OCI-LY7 (cell line): ENCODE measurements at regions of chr17 and their contacts with region 1.

Region 1: GRCh38 chr17:29931231-29931932 is 1.4 kb upstream of the SSH2 start:
- DNase-seq: peak; percentile 99
- H3K4me3 ChIP-seq: peak overlapping the region; percentile 84
- H3K27ac ChIP-seq: peak overlapping the region; percentile 95
- H3K4me1 ChIP-seq: peaks cover 31% of the 10 kb centered on the region
- CTCF ChIP-seq: peak; percentile 98

Region 2: DNA sequence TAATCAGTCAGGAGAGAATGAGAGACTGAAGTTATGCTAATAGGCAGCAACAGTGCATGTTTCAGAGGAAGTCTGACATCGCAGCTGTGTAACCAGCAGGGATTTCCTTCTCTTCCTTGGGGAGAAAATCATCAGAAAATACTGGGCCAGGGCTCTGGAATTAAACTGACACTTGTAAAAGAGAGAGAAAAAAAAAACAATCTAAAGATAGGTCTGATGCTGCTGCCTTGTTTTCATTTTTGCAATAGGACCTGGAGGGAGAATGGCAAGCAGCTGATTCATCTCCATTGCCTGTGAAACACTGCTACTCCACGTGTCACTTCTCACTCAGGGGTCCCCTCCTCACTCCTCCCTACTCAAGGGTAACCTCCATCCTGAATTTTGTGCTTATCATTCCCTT is 291.0 kb before region 1 on chr17:
- CTCF ChIA-PET with region 1: interaction called, 4 read pairs
- POLR2A ChIA-PET with region 1: no interaction called
- intact Hi-C with region 1: loop called (anchors 1 kb)
- DNase-seq: no peak
- H3K4me3 ChIP-seq: no peak overlapping the region
- H3K27ac ChIP-seq: no peak overlapping the region
- H3K4me1 ChIP-seq: peaks cover 10% of the 10 kb centered on the region
- CTCF ChIP-seq: no peak

Region 3: GRCh38 chr17:29807520-29808351 is 123.6 kb before region 1 on chr17:
- CTCF ChIA-PET with region 1: interaction called, 16 read pairs
- POLR2A ChIA-PET with region 1: interaction called, 74 read pairs
- intact Hi-C with region 1: loop called (anchors 1 kb)
- DNase-seq: peak; percentile 83
- H3K4me3 ChIP-seq: peak overlapping the region; percentile 23
- H3K27ac ChIP-seq: peak overlapping the region; percentile 85
- H3K4me1 ChIP-seq: peaks cover 38% of the 10 kb centered on the region
- CTCF ChIP-seq: peak; percentile 87

Region 4: DNA sequence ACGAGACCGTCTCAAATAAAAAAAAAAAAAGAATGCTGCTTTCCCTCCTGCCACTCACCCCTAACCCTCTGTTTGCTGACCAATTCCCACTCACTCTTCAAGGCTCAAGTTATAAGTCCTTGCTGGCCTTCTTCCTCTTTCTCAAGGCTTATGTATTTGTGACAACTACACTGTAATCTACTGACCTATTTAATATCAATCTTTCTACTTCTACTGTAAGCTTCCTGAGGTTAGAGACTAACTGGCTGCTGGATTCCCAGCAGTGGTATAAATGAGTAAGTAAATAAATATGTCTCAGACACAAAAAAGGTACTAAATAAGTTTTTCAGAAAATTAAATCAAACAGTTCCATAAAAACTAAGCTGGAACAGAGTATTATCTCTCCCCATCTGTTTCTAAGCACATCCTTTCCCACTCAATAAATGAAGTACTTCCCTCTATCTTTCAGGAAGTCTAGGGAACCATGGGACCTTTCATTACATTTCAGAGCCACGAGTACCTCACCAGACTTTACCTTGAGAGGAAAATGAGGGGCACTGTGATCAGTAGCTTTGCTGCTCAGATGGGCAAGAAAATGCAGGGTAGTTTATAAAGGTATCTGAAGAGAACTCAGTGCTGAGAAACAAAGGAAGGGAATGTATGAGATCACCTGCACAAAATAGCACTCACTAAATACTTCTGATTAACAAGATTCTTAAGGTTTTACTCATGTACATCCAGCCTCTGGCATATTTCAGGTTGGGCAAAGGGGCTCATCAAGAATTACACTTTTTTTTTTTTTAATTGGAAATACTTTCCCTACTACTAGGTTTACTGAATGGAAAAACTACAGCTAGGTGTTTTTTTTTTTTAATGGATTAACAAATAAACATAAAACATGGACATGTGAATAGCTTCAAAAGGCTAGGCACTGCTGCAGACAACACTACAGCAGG is 12.2 kb before region 1 on chr17:
- CTCF ChIA-PET with region 1: no interaction called
- POLR2A ChIA-PET with region 1: interaction called, 12 read pairs
- intact Hi-C with region 1: no loop called
- DNase-seq: no peak
- H3K4me3 ChIP-seq: no peak overlapping the region
- H3K27ac ChIP-seq: no peak overlapping the region
- H3K4me1 ChIP-seq: peaks cover 12% of the 10 kb centered on the region
- CTCF ChIP-seq: no peak

Region 5: GRCh38 chr17:30600049-30600829 is 668.9 kb after region 1 on chr17:
- CTCF ChIA-PET with region 1: no interaction called
- POLR2A ChIA-PET with region 1: no interaction called
- intact Hi-C with region 1: loop called (anchors 5 kb)
- DNase-seq: peak; percentile 89
- H3K4me3 ChIP-seq: peak overlapping the region; percentile 77
- H3K27ac ChIP-seq: peak overlapping the region; percentile 88
- H3K4me1 ChIP-seq: peaks cover 21% of the 10 kb centered on the region
- CTCF ChIP-seq: peak; percentile 73